A673 (cell line): ENCODE measurements at regions of chr1 and their contacts with region 1.

Region 1: GRCh38 chr1:165827268-165828102 is at the start of gene UCK2:
- DNase-seq: peak; percentile 81
- H3K4me3 ChIP-seq: peak within 1 kb of the TSS; percentile 86
- H3K27ac ChIP-seq: peak within 1 kb of the TSS; percentile 93
- H3K4me1 ChIP-seq: peaks cover 9% of the 10 kb centered on the region
- H3K27me3 ChIP-seq: no peaks in the 10 kb centered on the region
- CTCF ChIP-seq: 0 out of 2 replicates have a peak, but pooled peaks have one; percentile 9
- total RNA-seq, gene UCK2: 78.7 and 84.2 TPM in 2 replicates

Region 2: GRCh38 chr1:165666152-165666825 is 161.2 kb before region 1 on chr1:
- CTCF ChIA-PET with region 1: no interaction called
- POLR2A ChIA-PET with region 1: no interaction called
- intact Hi-C with region 1: no loop called
- DNase-seq: no peak
- H3K4me3 ChIP-seq: no peak overlapping the region
- H3K27ac ChIP-seq: no peak overlapping the region
- H3K4me1 ChIP-seq: no peaks in the 10 kb centered on the region
- H3K27me3 ChIP-seq: no peaks in the 10 kb centered on the region
- CTCF ChIP-seq: no peak

Region 3: GRCh38 chr1:165697881-165698760 is 129.4 kb before region 1 on chr1 and contains the start of gene ALDH9A1:
- CTCF ChIA-PET with region 1: no interaction called
- POLR2A ChIA-PET with region 1: interaction called, 5 read pairs
- intact Hi-C with region 1: loop called (anchors 5 kb)
- DNase-seq: peak; percentile 94
- H3K4me3 ChIP-seq: peak within 1 kb of the TSS; percentile 81
- H3K27ac ChIP-seq: peak within 1 kb of the TSS; percentile 97
- H3K4me1 ChIP-seq: peaks cover 26% of the 10 kb centered on the region
- H3K27me3 ChIP-seq: no peaks in the 10 kb centered on the region
- CTCF ChIP-seq: peak; percentile 48
- total RNA-seq, gene ALDH9A1: 81.7 and 83.0 TPM in 2 replicates

Region 4: GRCh38 chr1:165768513-165769394 is 58.7 kb before region 1 on chr1 and contains the start of gene TMCO1:
- CTCF ChIA-PET with region 1: no interaction called
- POLR2A ChIA-PET with region 1: no interaction called
- intact Hi-C with region 1: loop called (anchors 5 kb)
- DNase-seq: peak; percentile 99
- H3K4me3 ChIP-seq: peak within 1 kb of the TSS; percentile 85
- H3K27ac ChIP-seq: peak within 1 kb of the TSS; percentile 95
- H3K4me1 ChIP-seq: peaks cover 6% of the 10 kb centered on the region
- H3K27me3 ChIP-seq: no peaks in the 10 kb centered on the region
- CTCF ChIP-seq: no peak
- total RNA-seq, gene TMCO1: 95.7 and 116 TPM in 2 replicates

Region 5: GRCh38 chr1:165816826-165817497 is 10.5 kb before region 1 on chr1:
- CTCF ChIA-PET with region 1: no interaction called
- POLR2A ChIA-PET with region 1: no interaction called
- intact Hi-C with region 1: no loop called
- DNase-seq: no peak
- H3K4me3 ChIP-seq: no peak overlapping the region
- H3K27ac ChIP-seq: no peak overlapping the region
- H3K4me1 ChIP-seq: no peaks in the 10 kb centered on the region
- H3K27me3 ChIP-seq: no peaks in the 10 kb centered on the region
- CTCF ChIP-seq: no peak

Region 6: GRCh38 chr1:165856606-165857005 is 29.1 kb after region 1 on chr1:
- CTCF ChIA-PET with region 1: no interaction called
- POLR2A ChIA-PET with region 1: interaction called, 11 read pairs
- intact Hi-C with region 1: no loop called
- DNase-seq: no peak
- H3K4me3 ChIP-seq: no peak overlapping the region
- H3K27ac ChIP-seq: no peak overlapping the region
- H3K4me1 ChIP-seq: peaks cover 24% of the 10 kb centered on the region
- H3K27me3 ChIP-seq: no peaks in the 10 kb centered on the region
- CTCF ChIP-seq: no peak

Region 7: GRCh38 chr1:165871311-165872067 is 44.0 kb after region 1 on chr1:
- CTCF ChIA-PET with region 1: no interaction called
- POLR2A ChIA-PET with region 1: no interaction called
- intact Hi-C with region 1: no loop called
- DNase-seq: peak; percentile 65
- H3K4me3 ChIP-seq: no peak overlapping the region
- H3K27ac ChIP-seq: no peak overlapping the region
- H3K4me1 ChIP-seq: no peaks in the 10 kb centered on the region
- H3K27me3 ChIP-seq: no peaks in the 10 kb centered on the region
- CTCF ChIP-seq: peak; percentile 51

Region 8: DNA sequence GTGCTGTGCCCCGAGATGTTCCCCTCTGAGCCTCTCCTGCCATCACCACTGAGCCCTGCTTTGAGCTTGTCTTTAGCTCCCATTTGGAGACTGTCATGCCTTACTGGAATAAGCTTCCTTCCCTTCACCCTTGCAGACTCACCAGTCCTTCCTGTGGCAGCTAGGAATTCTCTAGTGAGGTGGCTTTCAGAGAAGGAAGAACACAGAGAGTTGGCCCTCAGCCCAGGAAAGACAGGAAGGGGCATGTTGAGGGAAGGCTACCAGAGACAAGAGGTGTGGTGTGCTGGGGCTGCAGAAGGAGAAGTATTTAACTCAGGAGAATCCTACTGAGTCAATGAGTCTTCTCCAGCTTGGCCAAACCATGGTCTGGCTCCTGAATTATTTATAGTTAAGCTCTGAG is 76.2 kb after region 1 on chr1:
- CTCF ChIA-PET with region 1: no interaction called
- POLR2A ChIA-PET with region 1: no interaction called
- intact Hi-C with region 1: loop called (anchors 5 kb)
- DNase-seq: peak; percentile 82
- H3K4me3 ChIP-seq: no peak overlapping the region
- H3K27ac ChIP-seq: no peak overlapping the region
- H3K4me1 ChIP-seq: peaks cover 37% of the 10 kb centered on the region
- H3K27me3 ChIP-seq: no peaks in the 10 kb centered on the region
- CTCF ChIP-seq: no peak